ENCODE measurements at regions of chr5 and their contacts with region 1.

Region 1: GRCh38 chr5:174311531-174312269 is 266.2 kb downstream of the NSG2 start:
- DNase-seq: peak; percentile 54 to 61
- ATAC-seq: peak; percentile 63 to 94
- H3K4me3 ChIP-seq: peak overlapping the region; percentile 31; the same call in 2 of the 3 replicates
- H3K27ac ChIP-seq: peak overlapping the region; percentile 29 to 75; a peak in 4 of 6 replicates
- H3K4me1 ChIP-seq: no peaks in the 10 kb centered on the region
- CTCF ChIP-seq: peak; percentile 90
- EP300 ChIP-seq: no peak
- POLR2A ChIP-seq: no peak
- RAD21 ChIP-seq: peak; percentile 73 to 93

Region 2: GRCh38 chr5:174020397-174021296 is 291.1 kb before region 1 on chr5:
- CTCF ChIA-PET with region 1: interaction called, 10 read pairs
- POLR2A ChIA-PET with region 1: no interaction called
- DNase-seq: peak; percentile 44 to 72
- ATAC-seq: peak; percentile 62 to 85; a peak in 5 of 6 replicates
- H3K4me3 ChIP-seq: no peak overlapping the region
- H3K27ac ChIP-seq: no peak overlapping the region
- H3K4me1 ChIP-seq: no peaks in the 10 kb centered on the region
- CTCF ChIP-seq: peak; percentile 53
- EP300 ChIP-seq: no peak
- POLR2A ChIP-seq: no peak
- RAD21 ChIP-seq: peak; percentile 62 to 82

Region 3: GRCh38 chr5:174053905-174054304 is 257.8 kb before region 1 on chr5:
- CTCF ChIA-PET with region 1: interaction called, 422 read pairs
- POLR2A ChIA-PET with region 1: no interaction called
- DNase-seq: no peak
- ATAC-seq: no peak
- H3K4me3 ChIP-seq: no peak overlapping the region
- H3K27ac ChIP-seq: no peak overlapping the region
- H3K4me1 ChIP-seq: no peaks in the 10 kb centered on the region
- CTCF ChIP-seq: no peak
- EP300 ChIP-seq: no peak
- POLR2A ChIP-seq: no peak
- RAD21 ChIP-seq: no peak

Region 4: DNA sequence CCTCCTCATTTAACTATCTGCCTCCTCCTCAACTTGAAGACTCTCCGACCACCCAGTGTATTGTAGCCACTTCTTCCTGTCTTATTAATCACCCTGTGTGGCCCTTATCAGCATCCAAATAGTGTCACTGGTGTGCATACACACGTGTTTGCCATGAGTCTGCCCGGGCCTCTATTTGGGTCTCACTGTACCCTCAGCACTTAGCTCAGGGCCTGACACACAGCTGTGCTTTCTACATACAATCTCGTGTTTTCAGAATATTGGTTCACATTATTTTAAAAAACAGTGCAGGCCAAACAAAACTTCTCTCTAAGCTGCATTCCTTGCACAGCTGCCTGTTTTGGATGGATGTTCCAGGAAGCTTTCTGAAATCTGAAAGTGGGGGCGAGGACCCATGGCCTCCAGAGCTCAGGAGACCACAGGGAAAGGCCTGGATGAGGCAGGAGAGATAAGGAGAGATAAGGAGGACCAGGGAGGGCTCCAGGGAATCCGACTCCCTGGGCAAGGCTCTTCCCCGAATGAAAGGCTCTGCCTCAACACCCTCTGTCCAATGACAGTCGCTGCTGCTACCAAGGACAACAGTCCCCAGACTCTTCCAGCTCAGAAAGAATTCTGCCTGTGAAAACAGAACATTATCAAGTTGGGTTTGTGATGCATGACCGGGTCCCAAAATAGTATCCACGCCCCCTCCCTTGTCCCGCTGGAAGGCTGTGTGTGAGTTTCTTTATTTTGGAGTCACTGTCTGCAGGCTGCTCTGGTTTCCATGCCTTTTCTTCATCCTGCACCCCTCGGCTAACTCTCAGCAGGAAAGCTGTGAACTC is 10.5 kb before region 1 on chr5:
- CTCF ChIA-PET with region 1: interaction called, 52 read pairs
- POLR2A ChIA-PET with region 1: no interaction called
- DNase-seq: no peak
- ATAC-seq: no peak
- H3K4me3 ChIP-seq: no peak overlapping the region
- H3K27ac ChIP-seq: no peak overlapping the region
- H3K4me1 ChIP-seq: no peaks in the 10 kb centered on the region
- CTCF ChIP-seq: no peak
- EP300 ChIP-seq: no peak
- POLR2A ChIP-seq: no peak
- RAD21 ChIP-seq: no peak

Region 5: GRCh38 chr5:174359071-174359470 is 47.4 kb after region 1 on chr5:
- CTCF ChIA-PET with region 1: no interaction called
- POLR2A ChIA-PET with region 1: no interaction called
- DNase-seq: no peak
- ATAC-seq: no peak
- H3K4me3 ChIP-seq: no peak overlapping the region
- H3K27ac ChIP-seq: no peak overlapping the region
- H3K4me1 ChIP-seq: peaks cover 3% of the 10 kb centered on the region; the same call in 1 of the 3 replicates
- CTCF ChIP-seq: no peak
- EP300 ChIP-seq: no peak
- POLR2A ChIP-seq: no peak
- RAD21 ChIP-seq: no peak

Measured in A549 (cell line).